PC-9 (cell line): ENCODE measurements at regions of chr6 and their contacts with region 1.

Region 1: GRCh38 chr6:25017932-25018567 is 82.3 kb upstream of the RIPOR2 start:
- DNase-seq: peak; percentile 59 to 83
- H3K4me3 ChIP-seq: 0 out of 2 replicates have a peak overlapping the region, but pooled peaks have one; percentile 6
- H3K27ac ChIP-seq: peak overlapping the region; percentile 74
- H3K4me1 ChIP-seq: peaks cover 38% of the 10 kb centered on the region
- H3K27me3 ChIP-seq: no peaks in the 10 kb centered on the region
- CTCF ChIP-seq: peak; percentile 88

Region 2: DNA sequence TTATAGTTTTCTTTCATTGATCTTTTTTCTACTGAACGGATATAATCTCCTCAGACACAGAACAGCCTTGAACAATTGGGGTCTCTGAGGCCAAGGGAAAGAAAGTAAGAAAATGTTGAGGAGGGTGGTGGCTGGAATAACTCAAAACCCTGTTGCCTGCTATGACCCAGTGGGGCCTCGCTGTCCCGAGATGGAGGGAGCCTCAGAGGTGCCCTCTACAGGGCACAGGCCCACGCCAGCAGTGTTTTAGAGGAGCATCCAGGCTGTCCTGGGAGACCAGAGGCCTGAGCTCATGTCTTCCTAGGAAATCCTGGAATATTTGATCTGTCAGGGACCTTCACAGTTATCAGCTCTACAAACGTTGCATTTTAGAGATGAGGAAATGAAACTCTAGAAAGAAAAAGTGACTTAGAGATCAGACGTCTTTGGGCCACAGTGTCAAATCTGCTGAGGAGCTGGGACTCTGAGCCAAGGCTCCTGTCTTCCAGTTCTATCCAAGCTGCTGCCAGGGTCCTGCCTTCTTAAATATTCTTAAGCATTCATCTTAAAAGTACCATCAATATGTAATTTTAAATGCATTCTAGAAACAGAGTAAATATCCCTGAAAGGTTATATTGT is 497.0 kb before region 1 on chr6:
- CTCF ChIA-PET with region 1: no interaction called
- POLR2A ChIA-PET with region 1: no interaction called
- intact Hi-C with region 1: loop called (anchors 10 kb)
- DNase-seq: peak in 1 of 2 experiments; percentile 55
- H3K4me3 ChIP-seq: no peak overlapping the region
- H3K27ac ChIP-seq: no peak overlapping the region
- H3K4me1 ChIP-seq: no peaks in the 10 kb centered on the region
- H3K27me3 ChIP-seq: no peaks in the 10 kb centered on the region
- CTCF ChIP-seq: peak; percentile 72

Region 3: DNA sequence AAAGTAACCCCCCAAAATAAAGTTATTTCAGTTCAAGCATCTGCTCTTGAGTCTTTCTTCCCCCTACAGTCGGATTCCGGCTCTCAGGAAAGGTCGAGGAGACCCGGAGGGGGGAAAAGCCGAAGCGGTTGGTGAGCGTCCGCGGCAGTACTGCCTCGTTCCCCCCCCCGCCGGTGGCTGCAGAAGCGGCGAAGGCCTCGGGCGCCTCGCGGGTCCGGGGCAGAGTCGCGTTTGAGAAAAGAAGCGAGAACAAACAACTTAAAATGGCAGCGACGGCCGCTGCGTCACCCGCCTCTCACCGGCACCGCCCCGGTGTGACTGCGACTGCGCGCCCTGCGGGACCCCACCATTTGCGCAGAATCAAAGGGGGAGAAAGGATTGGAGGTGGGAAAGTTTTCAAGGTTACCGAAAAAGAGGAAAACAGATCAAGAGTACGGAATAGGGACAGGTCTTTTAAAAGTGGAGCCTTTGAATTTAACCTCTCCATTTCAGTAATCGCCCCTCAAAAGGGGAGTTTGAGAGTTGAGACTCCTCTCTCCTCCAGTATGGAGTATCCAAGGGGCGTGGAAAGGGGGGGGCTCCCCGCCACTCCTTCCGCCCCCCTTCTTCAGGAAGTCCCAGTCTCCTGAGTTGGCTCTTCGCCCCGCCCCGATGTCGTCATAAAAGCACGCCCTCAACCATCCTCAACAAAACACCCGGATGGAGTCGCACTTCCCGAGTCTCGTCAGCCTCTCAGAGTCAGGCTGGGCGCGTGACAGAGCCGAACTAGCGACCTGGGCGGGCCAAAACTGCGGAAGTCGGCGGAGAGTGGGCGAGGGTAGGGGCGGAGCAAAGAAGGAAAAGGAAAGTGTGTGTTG is 297.2 kb before region 1 on chr6:
- CTCF ChIA-PET with region 1: no interaction called
- POLR2A ChIA-PET with region 1: no interaction called
- intact Hi-C with region 1: loop called (anchors 5 kb)
- DNase-seq: peak; percentile 99 to 100
- H3K4me3 ChIP-seq: peak overlapping the region; percentile 95
- H3K27ac ChIP-seq: peak overlapping the region; percentile 93
- H3K4me1 ChIP-seq: peaks cover 42% of the 10 kb centered on the region
- H3K27me3 ChIP-seq: no peaks in the 10 kb centered on the region
- CTCF ChIP-seq: no peak

Region 4: DNA sequence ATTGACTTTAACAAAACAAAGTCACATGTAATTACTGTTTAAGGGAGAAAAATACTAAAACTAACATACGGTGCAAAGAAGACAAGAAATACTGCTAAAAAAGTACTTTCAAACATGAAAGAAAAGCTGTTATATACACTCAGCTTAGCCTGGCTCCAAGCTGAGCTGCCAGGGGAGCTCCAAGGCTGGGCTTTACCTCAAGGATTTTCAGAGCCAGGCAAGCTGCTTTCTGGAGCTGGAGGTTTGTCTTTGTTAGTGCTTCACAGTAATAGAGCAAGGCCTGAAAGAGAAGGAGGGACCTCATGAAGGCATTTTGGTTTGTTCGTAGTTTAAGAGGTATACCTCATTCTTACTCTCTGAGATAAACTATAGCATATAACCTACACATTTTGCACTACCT is 199.7 kb before region 1 on chr6:
- CTCF ChIA-PET with region 1: interaction called, 15 read pairs
- POLR2A ChIA-PET with region 1: no interaction called
- intact Hi-C with region 1: no loop called
- DNase-seq: no peak
- H3K4me3 ChIP-seq: no peak overlapping the region
- H3K27ac ChIP-seq: no peak overlapping the region
- H3K4me1 ChIP-seq: no peaks in the 10 kb centered on the region
- H3K27me3 ChIP-seq: no peaks in the 10 kb centered on the region
- CTCF ChIP-seq: no peak

Region 5: GRCh38 chr6:24838081-24838480 is 180.0 kb before region 1 on chr6:
- CTCF ChIA-PET with region 1: no interaction called
- POLR2A ChIA-PET with region 1: no interaction called
- intact Hi-C with region 1: no loop called
- DNase-seq: no peak
- H3K4me3 ChIP-seq: no peak overlapping the region
- H3K27ac ChIP-seq: no peak overlapping the region
- H3K4me1 ChIP-seq: no peaks in the 10 kb centered on the region
- H3K27me3 ChIP-seq: no peaks in the 10 kb centered on the region
- CTCF ChIP-seq: no peak

Region 6: DNA sequence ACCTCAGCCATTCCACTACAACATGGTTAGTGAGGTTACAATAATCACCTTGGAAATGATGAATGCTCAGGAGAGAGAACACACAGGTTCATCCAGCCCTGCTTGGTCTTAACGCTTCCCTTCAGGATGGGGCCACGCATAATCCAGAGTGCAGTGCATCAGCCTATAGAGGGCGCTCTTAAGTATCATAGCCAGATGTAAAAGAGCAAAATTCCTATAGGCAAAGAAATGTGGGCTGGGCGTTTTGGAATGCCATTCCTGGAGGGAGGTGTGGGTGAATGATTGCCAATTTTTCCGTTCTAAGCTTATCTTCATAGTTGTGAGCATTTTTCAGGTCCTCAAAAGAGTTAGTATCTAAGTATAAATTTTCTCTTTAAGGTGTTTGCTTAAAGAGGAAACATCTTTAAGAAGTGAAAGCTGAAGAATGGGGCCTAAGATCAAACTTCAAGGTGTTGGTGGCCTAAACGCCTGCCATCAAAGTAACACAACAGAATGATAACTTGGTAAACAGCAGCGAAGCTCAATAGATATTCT is 84.1 kb before region 1 on chr6:
- CTCF ChIA-PET with region 1: interaction called, 24 read pairs
- POLR2A ChIA-PET with region 1: no interaction called
- intact Hi-C with region 1: no loop called
- DNase-seq: no peak
- H3K4me3 ChIP-seq: no peak overlapping the region
- H3K27ac ChIP-seq: no peak overlapping the region
- H3K4me1 ChIP-seq: peaks cover 24% of the 10 kb centered on the region
- H3K27me3 ChIP-seq: no peaks in the 10 kb centered on the region
- CTCF ChIP-seq: peak; percentile 49; the same call in 1 of the 2 replicates

Region 7: GRCh38 chr6:24991810-24992467 is 26.1 kb before region 1 on chr6:
- CTCF ChIA-PET with region 1: interaction called, 13 read pairs
- POLR2A ChIA-PET with region 1: no interaction called
- intact Hi-C with region 1: no loop called
- DNase-seq: peak in 1 of 2 experiments; percentile 42
- H3K4me3 ChIP-seq: no peak overlapping the region
- H3K27ac ChIP-seq: no peak overlapping the region
- H3K4me1 ChIP-seq: peaks cover 11% of the 10 kb centered on the region
- H3K27me3 ChIP-seq: no peaks in the 10 kb centered on the region
- CTCF ChIP-seq: peak; percentile 86

Region 8: GRCh38 chr6:25458485-25458884 is 440.4 kb after region 1 on chr6:
- CTCF ChIA-PET with region 1: no interaction called
- POLR2A ChIA-PET with region 1: no interaction called
- intact Hi-C with region 1: no loop called
- DNase-seq: no peak
- H3K4me3 ChIP-seq: no peak overlapping the region
- H3K27ac ChIP-seq: no peak overlapping the region
- H3K4me1 ChIP-seq: no peaks in the 10 kb centered on the region
- H3K27me3 ChIP-seq: no peaks in the 10 kb centered on the region
- CTCF ChIP-seq: no peak